Heart left ventricle (tissue), 16 donors: ENCODE measurements at regions of chr20 and their contacts with region 1.

Region 1: DNA sequence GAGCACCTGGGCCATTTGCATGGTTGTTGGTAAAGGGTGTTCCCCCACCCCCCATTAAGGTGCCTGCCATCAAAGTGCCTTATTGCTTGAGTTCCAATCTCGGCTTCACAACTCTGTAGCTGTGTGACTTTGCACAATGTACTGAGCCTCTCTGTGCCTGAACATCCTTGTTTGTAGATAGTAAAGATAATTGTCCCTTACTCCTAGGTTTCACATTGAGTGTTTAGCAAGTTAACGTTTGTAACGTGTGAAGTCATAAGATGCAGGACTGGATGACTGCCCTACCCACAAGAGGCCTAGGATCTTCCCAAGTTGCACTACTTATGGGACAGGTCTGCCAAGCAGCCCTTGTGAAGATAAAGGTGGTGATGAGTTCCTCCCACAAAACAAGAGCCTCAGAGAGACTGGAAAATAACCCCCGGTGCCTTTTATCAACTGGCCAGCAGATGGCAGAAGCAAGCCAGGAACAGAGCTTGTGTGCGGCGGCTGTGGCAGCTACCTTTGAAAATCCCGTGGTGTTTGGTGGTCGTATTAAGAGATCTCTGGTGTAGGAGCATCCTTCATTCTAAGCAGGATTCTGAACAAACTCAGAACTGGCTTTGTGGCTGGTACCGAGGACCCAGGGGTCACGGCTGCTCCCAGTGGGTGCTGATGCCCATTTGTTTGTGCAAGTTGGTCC is 99.0 kb downstream of the CDH26 start:
- DNase-seq: peak; percentile 56 to 73 (median 65)
- ATAC-seq: peak in 3 of 4 donors; percentile 44 to 61 (median 58)
- H3K4me3 ChIP-seq: peak overlapping the region in 1 of 12 donors; percentile 50
- H3K27ac ChIP-seq: peak overlapping the region in 2 of 12 donors; percentile 26 to 80
- H3K4me1 ChIP-seq: peaks cover 0 to 57% (median 17%) of the 10 kb centered on the region in 12 donors
- H3K27me3 ChIP-seq: peaks cover 0 to 5% (median 0%) of the 10 kb centered on the region in 9 donors
- CTCF ChIP-seq: peak; percentile 77 to 91 (median 86)
- POLR2A ChIP-seq: no peak

Region 2: GRCh38 chr20:59903621-59904020 is 153.6 kb before region 1 on chr20:
- intact Hi-C with region 1: no loop called
- DNase-seq: no peak
- ATAC-seq: no peak
- H3K4me3 ChIP-seq: no peak overlapping the region
- H3K27ac ChIP-seq: no peak overlapping the region
- H3K4me1 ChIP-seq: no peaks in the 10 kb centered on the region
- H3K27me3 ChIP-seq: no peaks in the 10 kb centered on the region
- CTCF ChIP-seq: no peak
- POLR2A ChIP-seq: no peak

Region 3: GRCh38 chr20:59940174-59940971 is 116.9 kb before region 1 on chr20 and contains the starts of genes FAM217B and PPP1R3D:
- intact Hi-C with region 1: loop called in 2 of 10 experiments (anchors 5 to 10 kb)
- DNase-seq: peak; percentile 98 to 99 (median 98)
- ATAC-seq: peak; percentile 89 to 96 (median 94)
- H3K4me3 ChIP-seq: peak within 1 kb of the TSS; percentile 49 to 90 (median 76)
- H3K27ac ChIP-seq: peak within 1 kb of the TSS; percentile 90 to 99 (median 96)
- H3K4me1 ChIP-seq: peaks cover 3 to 68% (median 51%) of the 10 kb centered on the region in 12 donors
- H3K27me3 ChIP-seq: no peaks in the 10 kb centered on the region
- CTCF ChIP-seq: peak in 6 of 12 donors; percentile 15 to 46 (median 30)
- POLR2A ChIP-seq: peak in 1 of 2 donors; percentile 88
- total RNA-seq, gene FAM217B: 16.7 to 38.0 (median 26.4) TPM
- total RNA-seq, gene PPP1R3D: 9.1 to 14.7 (median 12.7) TPM

Region 4: GRCh38 chr20:60037120-60037499 is 20.2 kb before region 1 on chr20:
- intact Hi-C with region 1: no loop called
- DNase-seq: no peak
- ATAC-seq: no peak
- H3K4me3 ChIP-seq: no peak overlapping the region
- H3K27ac ChIP-seq: peak overlapping the region in 1 of 12 donors; percentile 43
- H3K4me1 ChIP-seq: peaks cover 0 to 25% (median 14%) of the 10 kb centered on the region in 12 donors
- H3K27me3 ChIP-seq: no peaks in the 10 kb centered on the region
- CTCF ChIP-seq: no peak
- POLR2A ChIP-seq: no peak

Region 5: GRCh38 chr20:61120595-61121515 is 1063.6 kb after region 1 on chr20:
- intact Hi-C with region 1: loop called in 5 of 10 experiments (anchors 5 to 10 kb)
- DNase-seq: peak in 2 of 5 donors; percentile 46 to 52
- ATAC-seq: peak in 3 of 4 donors; percentile 44 to 64 (median 61)
- H3K4me3 ChIP-seq: no peak overlapping the region
- H3K27ac ChIP-seq: no peak overlapping the region
- H3K4me1 ChIP-seq: peaks cover 0 to 3% (median 0%) of the 10 kb centered on the region in 12 donors
- H3K27me3 ChIP-seq: peaks cover 0 to 3% (median 0%) of the 10 kb centered on the region in 9 donors
- CTCF ChIP-seq: peak; percentile 21 to 60 (median 45)
- POLR2A ChIP-seq: no peak

Region 6: DNA sequence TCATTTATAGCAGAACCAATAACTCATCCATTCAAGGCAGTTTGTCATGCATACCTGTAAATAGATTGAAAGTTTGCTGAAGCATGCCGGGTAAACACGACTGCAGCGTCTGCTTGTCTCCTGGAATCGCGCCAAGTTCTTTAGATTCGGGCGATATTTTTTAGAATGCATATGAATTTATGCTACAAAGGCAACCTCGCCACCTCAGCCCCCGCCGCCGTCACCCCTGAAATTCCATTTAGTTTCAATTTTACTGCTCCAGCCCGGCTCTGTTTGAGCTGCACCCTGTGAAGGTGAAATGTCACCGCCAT is 1177.5 kb after region 1 on chr20:
- intact Hi-C with region 1: loop called in 3 of 10 experiments (anchors 2 to 10 kb)
- DNase-seq: no peak
- ATAC-seq: no peak
- H3K4me3 ChIP-seq: no peak overlapping the region
- H3K27ac ChIP-seq: no peak overlapping the region
- H3K4me1 ChIP-seq: peaks cover 0 to 6% (median 0%) of the 10 kb centered on the region in 12 donors
- H3K27me3 ChIP-seq: peaks cover 0 to 16% (median 0%) of the 10 kb centered on the region in 9 donors
- CTCF ChIP-seq: no peak
- POLR2A ChIP-seq: no peak

Region 7: DNA sequence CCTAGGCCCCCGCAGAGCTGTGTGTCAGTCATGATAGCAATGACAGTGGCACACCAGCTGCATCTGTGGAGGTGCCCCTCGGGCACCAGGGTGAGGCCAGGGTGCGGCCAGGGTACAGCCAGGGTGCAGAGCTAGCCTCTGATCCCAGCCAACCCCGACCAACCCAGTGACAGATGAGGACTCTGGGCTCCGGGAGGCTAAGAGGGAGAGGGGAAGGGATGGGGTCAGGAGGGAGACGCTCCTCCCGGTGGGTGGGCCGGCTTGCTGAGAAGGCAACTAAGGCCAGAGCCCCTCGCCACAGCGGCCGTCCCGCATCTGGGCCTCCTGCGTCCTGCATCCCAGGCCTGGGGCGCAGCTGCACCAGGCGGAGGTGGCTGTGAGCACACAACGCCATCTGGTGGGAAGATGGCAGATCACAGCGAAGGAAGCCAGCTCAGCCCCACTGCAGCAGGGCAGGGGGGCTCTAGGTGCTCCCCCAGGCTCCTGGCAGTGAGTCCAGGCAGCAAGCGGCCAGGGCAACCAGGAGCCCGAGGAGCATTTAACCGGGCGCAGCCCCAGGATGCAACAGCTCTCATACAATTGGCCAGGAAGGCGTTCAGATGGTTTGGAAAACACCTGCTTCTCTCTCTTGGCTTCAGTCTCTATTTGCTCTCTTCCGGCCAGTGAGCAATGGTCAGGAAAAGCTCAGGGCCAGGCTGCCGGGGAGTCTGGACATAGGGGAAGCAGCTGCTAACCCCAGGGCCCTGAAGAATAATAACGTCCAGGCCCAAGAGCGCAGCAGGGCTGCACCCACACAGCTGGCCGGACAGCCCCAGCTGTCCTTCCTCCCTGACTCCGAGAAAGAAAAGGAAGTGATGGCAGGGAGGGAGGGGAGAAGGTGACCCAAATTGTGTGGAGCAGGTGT is 1839.0 kb after region 1 on chr20:
- intact Hi-C with region 1: loop called in 2 of 10 experiments (anchors 5 to 10 kb)
- DNase-seq: peak in 1 of 5 donors; percentile 67
- ATAC-seq: peak in 3 of 4 donors; percentile 42 to 69 (median 60)
- H3K4me3 ChIP-seq: no peak overlapping the region
- H3K27ac ChIP-seq: no peak overlapping the region
- H3K4me1 ChIP-seq: no peaks in the 10 kb centered on the region
- H3K27me3 ChIP-seq: peaks cover 0 to 27% (median 0%) of the 10 kb centered on the region in 9 donors
- CTCF ChIP-seq: peak; percentile 52 to 73 (median 62)
- POLR2A ChIP-seq: no peak